ENCODE measurements at regions of chr1 and their contacts with region 1.

Region 1: DNA sequence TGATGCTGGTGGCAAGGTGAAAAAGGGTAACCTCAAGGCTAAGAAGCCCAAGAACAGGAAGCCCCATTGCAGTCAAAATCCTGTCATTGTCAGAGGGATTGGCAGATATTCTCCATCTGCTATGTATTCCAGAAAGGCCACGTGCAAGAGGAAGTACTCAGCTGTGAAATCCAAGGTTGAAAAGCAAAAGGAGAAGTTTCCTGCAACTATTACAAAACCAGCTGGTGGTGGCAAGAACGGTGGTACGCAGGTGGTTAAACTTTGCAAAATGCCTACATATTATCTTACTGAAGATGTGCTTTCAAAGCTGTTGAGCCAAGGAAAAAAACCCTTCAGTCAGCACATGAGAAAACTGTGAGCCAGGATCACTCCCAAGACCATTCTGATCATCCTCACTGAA is 13.7 kb upstream of the VPS45 start:
- DNase-seq: no peak
- CTCF ChIP-seq: no peak

Region 2: GRCh38 chr1:149899460-149900293 is 154.2 kb before region 1 on chr1 and contains the start of gene BOLA1:
- in situ Hi-C with region 1: loop called (anchors 10 kb)
- DNase-seq: peak; percentile 95
- CTCF ChIP-seq: no peak

Region 3: DNA sequence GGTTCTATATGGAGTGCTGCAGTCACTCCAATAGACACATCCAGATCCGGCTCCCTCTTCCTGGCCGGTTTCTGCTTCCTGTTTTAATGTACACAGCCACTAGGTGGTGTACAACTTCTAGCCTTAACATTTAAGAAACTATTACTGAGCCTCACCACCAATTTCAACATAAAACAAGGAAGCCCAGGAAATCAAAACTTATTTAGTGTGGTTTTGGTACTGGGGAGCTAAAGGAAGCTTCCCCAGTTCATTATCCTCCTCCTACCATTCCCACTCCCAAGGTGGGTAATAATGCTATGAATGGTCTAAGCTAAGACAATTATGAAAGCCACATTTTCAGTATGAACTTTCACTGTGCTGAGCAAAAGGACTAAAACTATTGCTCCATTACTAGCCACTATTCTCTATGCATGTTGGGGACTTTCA is 91.8 kb before region 1 on chr1:
- in situ Hi-C with region 1: loop called (anchors 5 kb)
- DNase-seq: peak; percentile 66
- CTCF ChIP-seq: peak; percentile 57

Region 4: GRCh38 chr1:150561974-150562445 is 508.1 kb after region 1 on chr1:
- in situ Hi-C with region 1: no loop called
- DNase-seq: peak; percentile 84
- CTCF ChIP-seq: no peak

Region 5: GRCh38 chr1:151352006-151352689 is 1298.2 kb after region 1 on chr1:
- in situ Hi-C with region 1: no loop called
- DNase-seq: no peak
- CTCF ChIP-seq: no peak

Measured in GM13976 (cell line).